GM12878 (cell line): ENCODE measurements at regions of chr12 and their contacts with region 1.

Region 1: GRCh38 chr12:6230321-6231110 is 30.3 kb downstream of the CD9 start:
- DNase-seq: peak; percentile 69
- ATAC-seq: peak; percentile 98
- H3K4me3 ChIP-seq: no peak overlapping the region
- H3K27ac ChIP-seq: no peak overlapping the region
- H3K4me1 ChIP-seq: peaks cover 9% of the 10 kb centered on the region
- H3K27me3 ChIP-seq: no peaks in the 10 kb centered on the region; a peak in 1 of 4 replicates
- CTCF ChIP-seq: no peak
- EP300 ChIP-seq: peak; percentile 67 to 84; a peak in 3 of 4 replicates
- POLR2A ChIP-seq: peak; percentile 16; the same call in 1 of the 2 replicates
- RAD21 ChIP-seq: no peak

Region 2: GRCh38 chr12:6215932-6216494 is 14.5 kb before region 1 on chr12:
- CTCF ChIA-PET with region 1: interaction called, 19 read pairs
- POLR2A ChIA-PET with region 1: interaction called, 17 read pairs
- RAD21 ChIA-PET with region 1: interaction called, 6 read pairs
- SMC1A ChIA-PET with region 1: interaction called, 9 read pairs
- in situ Hi-C with region 1: no loop called
- intact Hi-C with region 1: no loop called
- DNase-seq: no peak
- ATAC-seq: peak; percentile 34
- H3K4me3 ChIP-seq: no peak overlapping the region
- H3K27ac ChIP-seq: no peak overlapping the region
- H3K4me1 ChIP-seq: no peaks in the 10 kb centered on the region
- H3K27me3 ChIP-seq: no peaks in the 10 kb centered on the region; a peak in 1 of 4 replicates
- CTCF ChIP-seq: no peak
- EP300 ChIP-seq: no peak
- POLR2A ChIP-seq: no peak
- RAD21 ChIP-seq: no peak

Region 3: GRCh38 chr12:6267139-6267721 is 36.7 kb after region 1 on chr12:
- CTCF ChIA-PET with region 1: interaction called, 3 read pairs
- POLR2A ChIA-PET with region 1: interaction called, 8 read pairs
- RAD21 ChIA-PET with region 1: interaction called, 6 read pairs
- SMC1A ChIA-PET with region 1: interaction called, 6 read pairs
- in situ Hi-C with region 1: no loop called
- intact Hi-C with region 1: loop called (anchors 5 kb)
- DNase-seq: no peak
- ATAC-seq: peak; percentile 77
- H3K4me3 ChIP-seq: no peak overlapping the region
- H3K27ac ChIP-seq: no peak overlapping the region
- H3K4me1 ChIP-seq: peaks cover 5% of the 10 kb centered on the region
- H3K27me3 ChIP-seq: no peaks in the 10 kb centered on the region
- CTCF ChIP-seq: no peak
- EP300 ChIP-seq: peak in 1 of 2 experiments; percentile 62; a peak in 2 of 4 replicates
- POLR2A ChIP-seq: no peak
- RAD21 ChIP-seq: no peak

Region 4: GRCh38 chr12:6970089-6970527 is 739.6 kb after region 1 on chr12:
- CTCF ChIA-PET with region 1: no interaction called
- POLR2A ChIA-PET with region 1: no interaction called
- RAD21 ChIA-PET with region 1: no interaction called
- SMC1A ChIA-PET with region 1: no interaction called
- in situ Hi-C with region 1: no loop called
- intact Hi-C with region 1: no loop called
- DNase-seq: no peak
- ATAC-seq: peak; percentile 47
- H3K4me3 ChIP-seq: peak overlapping the region; percentile 72
- H3K27ac ChIP-seq: peak overlapping the region; percentile 65
- H3K4me1 ChIP-seq: peaks cover 20% of the 10 kb centered on the region
- H3K27me3 ChIP-seq: no peaks in the 10 kb centered on the region
- CTCF ChIP-seq: no peak
- EP300 ChIP-seq: no peak
- POLR2A ChIP-seq: no peak
- RAD21 ChIP-seq: no peak